MCF 10A (cell line): ENCODE measurements at regions of chrX and their contacts with region 1.

Region 1: GRCh38 chrX:132292793-132293192 is 73.5 kb upstream of the RAP2C start:
- DNase-seq: peak; percentile 67
- H3K4me3 Mint-ChIP-seq: no peak overlapping the region
- H3K27ac Mint-ChIP-seq: no peak overlapping the region
- H3K4me1 Mint-ChIP-seq: no peaks in the 10 kb centered on the region
- H3K27me3 Mint-ChIP-seq: peaks cover 27% of the 10 kb centered on the region
- CTCF ChIP-seq: peak; percentile 45

Region 2: DNA sequence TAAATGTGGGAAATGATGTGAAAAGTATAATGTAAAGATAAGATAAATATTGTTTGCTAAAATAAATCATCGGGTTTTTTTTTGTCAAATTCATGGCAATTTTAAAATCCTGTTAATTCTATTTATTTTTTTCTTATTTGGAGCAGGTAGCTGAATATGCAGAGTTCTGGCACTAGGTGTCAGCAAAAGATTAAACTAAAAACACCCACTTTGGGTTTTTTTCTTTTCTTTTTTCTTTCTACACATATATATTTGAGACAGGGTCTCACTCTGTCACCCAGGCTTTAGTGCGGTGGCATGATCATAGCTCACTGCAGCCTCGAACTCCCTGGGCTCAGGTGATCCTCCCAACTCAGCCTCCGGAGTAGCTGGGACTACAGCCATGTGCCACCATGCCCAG is 66.6 kb before region 1 on chrX:
- CTCF ChIA-PET with region 1: interaction called, 14 read pairs
- POLR2A ChIA-PET with region 1: no interaction called
- intact Hi-C with region 1: loop called (anchors 2 kb)
- DNase-seq: no peak
- H3K4me3 Mint-ChIP-seq: no peak overlapping the region
- H3K27ac Mint-ChIP-seq: no peak overlapping the region
- H3K4me1 Mint-ChIP-seq: peaks cover 10% of the 10 kb centered on the region
- H3K27me3 Mint-ChIP-seq: peaks cover 73% of the 10 kb centered on the region
- CTCF ChIP-seq: peak; percentile 38

Region 3: GRCh38 chrX:132270699-132271098 is 22.1 kb before region 1 on chrX:
- CTCF ChIA-PET with region 1: interaction called, 17 read pairs
- POLR2A ChIA-PET with region 1: interaction called, 16 read pairs
- intact Hi-C with region 1: no loop called
- DNase-seq: peak; percentile 89
- H3K4me3 Mint-ChIP-seq: peak overlapping the region; percentile 2
- H3K27ac Mint-ChIP-seq: peak overlapping the region; percentile 74
- H3K4me1 Mint-ChIP-seq: peaks cover 21% of the 10 kb centered on the region
- H3K27me3 Mint-ChIP-seq: peaks cover 51% of the 10 kb centered on the region
- CTCF ChIP-seq: no peak

Region 4: DNA sequence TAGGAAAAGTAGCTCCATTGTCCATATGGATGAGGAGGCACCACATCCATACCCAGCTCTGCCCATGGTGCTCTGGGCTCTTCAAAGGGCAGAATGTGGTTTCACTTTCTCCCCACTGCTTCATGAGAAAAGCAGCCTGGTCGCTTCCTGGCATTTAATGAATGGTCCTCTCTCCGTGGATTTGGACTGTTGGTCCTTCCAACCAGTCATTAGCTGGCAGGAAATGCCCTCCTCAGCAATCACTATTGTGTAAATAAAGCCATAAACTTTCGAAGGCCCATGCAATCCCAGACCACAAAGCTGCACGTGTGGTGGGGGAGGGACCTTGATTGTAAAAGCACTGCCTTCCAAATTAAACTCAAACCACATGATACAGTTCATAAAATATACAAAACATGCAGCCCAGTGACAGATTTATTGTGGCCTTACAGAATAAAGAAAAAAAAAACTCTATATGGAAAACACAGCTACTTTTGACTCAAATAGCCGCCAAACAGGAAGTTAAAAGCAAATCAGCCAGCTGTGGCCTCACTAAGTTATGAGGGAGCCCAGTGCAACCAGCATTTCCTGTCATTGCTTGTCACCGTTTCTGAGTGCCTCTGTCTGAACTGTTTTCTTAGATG is 187.9 kb after region 1 on chrX:
- CTCF ChIA-PET with region 1: interaction called, 10 read pairs
- POLR2A ChIA-PET with region 1: no interaction called
- intact Hi-C with region 1: loop called (anchors 5 kb)
- DNase-seq: peak; percentile 44
- H3K4me3 Mint-ChIP-seq: peak overlapping the region; percentile 66
- H3K27ac Mint-ChIP-seq: peak overlapping the region; percentile 82
- H3K4me1 Mint-ChIP-seq: peaks cover 7% of the 10 kb centered on the region
- H3K27me3 Mint-ChIP-seq: peaks cover 21% of the 10 kb centered on the region
- CTCF ChIP-seq: no peak

Region 5: DNA sequence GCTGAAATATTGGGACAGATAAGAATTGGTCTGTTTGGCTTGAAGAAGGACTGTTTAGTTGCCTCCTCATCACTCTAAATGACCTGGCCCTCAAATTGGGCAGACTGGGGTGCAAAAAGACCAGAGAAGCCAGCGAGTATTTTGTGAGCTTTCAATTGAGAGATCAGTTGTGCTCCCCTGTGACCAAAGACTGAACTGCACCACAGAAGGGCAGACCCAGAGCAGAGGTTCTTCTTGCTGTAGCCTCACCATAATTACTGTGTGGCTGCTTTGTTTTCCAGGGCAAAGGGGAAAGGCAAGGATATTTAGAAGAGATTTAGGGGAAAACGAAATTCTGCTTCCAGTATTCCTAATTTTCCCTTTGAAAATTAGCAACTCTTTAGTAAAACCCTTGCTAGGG is 300.1 kb after region 1 on chrX:
- CTCF ChIA-PET with region 1: interaction called, 13 read pairs
- POLR2A ChIA-PET with region 1: no interaction called
- intact Hi-C with region 1: loop called (anchors 2 kb)
- DNase-seq: no peak
- H3K4me3 Mint-ChIP-seq: no peak overlapping the region
- H3K27ac Mint-ChIP-seq: no peak overlapping the region
- H3K4me1 Mint-ChIP-seq: no peaks in the 10 kb centered on the region
- H3K27me3 Mint-ChIP-seq: peaks cover 74% of the 10 kb centered on the region
- CTCF ChIP-seq: peak; percentile 18